PC-3 (cell line): ENCODE measurements at regions of chr2 and their contacts with region 1.

Region 1: GRCh38 chr2:10597935-10598334 is 91.8 kb downstream of the NOL10 start:
- DNase-seq: peak; percentile 94
- ATAC-seq: peak; percentile 90
- H3K4me3 ChIP-seq: peak overlapping the region; percentile 52
- H3K27ac ChIP-seq: peak overlapping the region; percentile 90
- H3K4me1 ChIP-seq: peaks cover 39% of the 10 kb centered on the region
- H3K27me3 ChIP-seq: no peaks in the 10 kb centered on the region
- CTCF ChIP-seq: no peak

Region 2: DNA sequence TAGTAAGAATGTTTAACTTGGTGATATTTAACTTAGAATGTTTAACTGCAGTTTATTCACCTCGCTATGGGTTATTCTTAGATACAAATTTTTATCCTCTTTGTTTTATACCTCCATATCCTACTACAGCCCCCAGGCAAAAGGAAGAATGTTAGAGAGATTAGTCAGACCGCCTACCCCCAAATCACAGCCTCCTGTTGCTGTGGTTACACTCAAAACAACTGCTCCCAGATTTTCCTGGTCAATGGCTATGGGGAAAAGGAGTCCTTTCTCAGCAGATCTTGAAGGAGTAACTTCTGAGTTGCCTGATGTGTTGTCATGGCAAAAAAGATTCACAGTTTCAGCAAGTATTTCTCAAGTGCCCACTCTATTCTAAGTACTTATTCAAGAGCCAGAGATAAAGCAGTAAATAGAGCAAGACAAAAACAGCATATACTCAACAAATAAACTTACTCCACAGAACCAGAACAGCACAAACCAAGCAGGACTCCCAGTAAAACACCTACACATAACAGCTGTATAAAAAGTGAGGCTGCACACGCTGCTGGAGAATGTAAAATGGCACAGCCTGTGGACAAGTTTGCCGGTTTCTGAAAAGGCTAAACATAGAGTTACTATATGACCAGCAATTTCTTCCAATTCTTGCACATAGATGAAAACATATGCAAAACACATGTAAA is 13.0 kb before region 1 on chr2:
- CTCF ChIA-PET with region 1: no interaction called
- POLR2A ChIA-PET with region 1: interaction called, 5 read pairs
- intact Hi-C with region 1: loop called (anchors 2 kb)
- DNase-seq: peak; percentile 97
- ATAC-seq: peak; percentile 84
- H3K4me3 ChIP-seq: peak overlapping the region; percentile 40
- H3K27ac ChIP-seq: peak overlapping the region; percentile 97
- H3K4me1 ChIP-seq: peaks cover 37% of the 10 kb centered on the region
- H3K27me3 ChIP-seq: no peaks in the 10 kb centered on the region
- CTCF ChIP-seq: no peak